Sciatic nerve (tissue), 2 donors: ENCODE measurements at regions of chr12 and their contacts with region 1.

Region 1: DNA sequence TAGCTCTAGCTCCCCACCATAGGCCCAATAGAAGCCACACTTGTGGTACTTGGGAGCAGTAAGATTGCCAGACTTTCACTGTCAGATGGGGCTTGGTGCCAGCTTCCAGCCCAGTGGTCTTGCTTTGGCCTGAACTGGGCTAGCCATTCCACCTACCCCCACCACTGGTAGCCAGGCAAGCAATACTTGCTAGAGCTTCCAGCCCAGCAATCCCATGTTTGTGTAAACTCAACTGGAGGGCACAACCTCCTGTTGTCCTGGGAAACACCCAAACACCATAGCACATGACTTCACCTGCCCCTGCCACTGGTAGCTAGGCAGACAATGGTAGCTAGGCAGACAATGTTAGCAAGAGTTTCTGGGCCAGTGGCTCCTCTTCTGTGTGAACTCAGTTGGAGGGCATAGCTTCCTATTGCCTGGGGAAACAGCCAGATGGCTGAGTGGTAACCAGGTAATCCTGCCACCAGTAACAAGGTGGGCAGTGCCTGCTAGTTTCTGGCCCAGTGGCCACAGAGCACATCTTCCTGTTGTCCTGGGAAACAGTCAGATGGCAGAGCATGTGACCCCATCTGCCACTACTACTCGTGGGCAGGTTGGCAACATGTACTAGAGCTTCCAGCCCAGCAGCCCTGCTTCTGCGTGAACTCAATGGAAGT is 5.6 kb upstream of the OR6C76 start:
- DNase-seq: no peak
- ATAC-seq: no peak

Region 2: GRCh38 chr12:55194382-55194781 is 226.1 kb before region 1 on chr12:
- intact Hi-C with region 1: no loop called
- DNase-seq: no peak
- ATAC-seq: no peak

Region 3: GRCh38 chr12:55396326-55396725 is 24.1 kb before region 1 on chr12:
- intact Hi-C with region 1: no loop called
- DNase-seq: no peak
- ATAC-seq: no peak

Region 4: DNA sequence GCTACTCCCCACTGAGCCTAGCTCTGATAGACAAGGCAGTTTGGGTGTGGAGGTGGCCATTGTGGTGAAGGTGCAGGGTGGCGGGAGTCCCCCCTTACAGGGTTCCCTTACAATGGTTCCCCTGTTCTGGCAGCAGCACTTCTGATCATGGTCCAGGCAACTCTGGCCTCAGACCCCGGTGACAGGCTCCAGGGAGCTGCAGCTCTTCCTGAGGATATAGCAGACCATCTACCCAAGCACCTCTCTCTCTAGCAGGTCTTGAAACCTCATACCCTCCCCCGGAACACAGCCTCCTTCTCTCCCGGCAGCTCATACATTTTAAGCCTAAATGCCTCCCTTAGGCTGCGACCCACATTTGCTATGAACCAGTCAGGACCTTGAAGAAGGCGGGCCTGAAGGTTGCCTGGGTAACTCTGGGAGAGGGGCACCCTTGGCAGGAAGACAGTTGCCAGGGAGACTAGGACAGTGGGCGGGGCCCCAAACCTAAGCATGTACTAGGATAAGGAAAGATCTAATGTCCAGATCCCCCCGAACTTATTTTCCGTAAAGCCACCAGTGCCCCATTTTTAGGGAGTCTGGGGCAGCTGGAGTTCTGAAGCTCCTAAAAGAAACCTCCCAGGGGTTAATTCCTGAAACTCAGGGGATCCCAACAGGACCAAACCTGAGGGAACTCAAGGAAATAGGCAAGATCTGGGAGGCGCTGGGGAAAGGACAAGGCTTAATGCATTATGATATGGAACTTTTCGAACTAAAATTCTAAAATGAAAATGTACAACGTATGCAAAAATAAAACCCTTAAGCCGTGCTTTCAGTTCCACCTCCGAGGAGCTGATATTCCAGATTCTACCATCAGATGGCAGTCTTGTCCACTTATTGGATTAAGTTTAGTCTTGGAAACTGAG is 317.9 kb after region 1 on chr12:
- intact Hi-C with region 1: no loop called
- DNase-seq: peak; percentile 93
- ATAC-seq: peak; percentile 91

Region 5: DNA sequence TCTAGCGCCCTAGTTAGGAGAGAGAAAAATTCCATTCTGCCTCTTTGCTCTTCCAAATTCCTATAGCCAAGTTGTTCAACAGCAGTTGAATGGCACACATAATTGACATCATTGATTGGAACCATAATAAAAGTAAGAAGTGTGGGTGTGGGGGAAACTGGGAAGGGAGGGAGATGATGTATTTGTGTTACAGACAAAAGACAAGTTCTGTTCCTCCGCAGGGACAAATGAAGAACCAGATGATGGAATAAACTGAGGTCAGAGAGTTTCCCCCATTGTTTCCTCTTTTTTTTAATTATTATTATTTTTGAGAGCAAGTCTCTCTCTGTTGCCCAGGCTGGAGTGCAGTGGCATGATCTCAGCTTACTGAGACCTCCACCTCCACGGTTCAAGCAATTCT is 357.4 kb after region 1 on chr12:
- intact Hi-C with region 1: loop called (anchors 5 kb)
- DNase-seq: no peak
- ATAC-seq: no peak